Activated CD4-positive, alpha-beta T cell treated with anti-CD3 and anti-CD28 coated beads, Interleukin-2, amount 10 ng/mL, durations not matched to agents 24 days and 14 days (primary cell): ENCODE measurements at regions of chr11 and their contacts with region 1.

Region 1: GRCh38 chr11:66222358-66223149 is 45.9 kb upstream of the RAB1B start:
- DNase-seq: peak; percentile 98
- H3K4me3 Mint-ChIP-seq: peak overlapping the region; percentile 56
- H3K27ac Mint-ChIP-seq: peak overlapping the region; percentile 98
- H3K4me1 Mint-ChIP-seq: peaks cover 21% of the 10 kb centered on the region
- H3K27me3 Mint-ChIP-seq: no peaks in the 10 kb centered on the region

Region 2: GRCh38 chr11:65919146-65920033 is 303.2 kb before region 1 on chr11 and contains the start of gene DRAP1:
- intact Hi-C with region 1: no loop called
- DNase-seq: peak; percentile 99
- H3K4me3 Mint-ChIP-seq: peak within 1 kb of the TSS; percentile 96
- H3K27ac Mint-ChIP-seq: peak within 1 kb of the TSS; percentile 90
- H3K4me1 Mint-ChIP-seq: peaks cover 25% of the 10 kb centered on the region
- H3K27me3 Mint-ChIP-seq: no peaks in the 10 kb centered on the region
- total RNA-seq, gene DRAP1: 113 and 117 TPM in 2 replicates

Region 3: DNA sequence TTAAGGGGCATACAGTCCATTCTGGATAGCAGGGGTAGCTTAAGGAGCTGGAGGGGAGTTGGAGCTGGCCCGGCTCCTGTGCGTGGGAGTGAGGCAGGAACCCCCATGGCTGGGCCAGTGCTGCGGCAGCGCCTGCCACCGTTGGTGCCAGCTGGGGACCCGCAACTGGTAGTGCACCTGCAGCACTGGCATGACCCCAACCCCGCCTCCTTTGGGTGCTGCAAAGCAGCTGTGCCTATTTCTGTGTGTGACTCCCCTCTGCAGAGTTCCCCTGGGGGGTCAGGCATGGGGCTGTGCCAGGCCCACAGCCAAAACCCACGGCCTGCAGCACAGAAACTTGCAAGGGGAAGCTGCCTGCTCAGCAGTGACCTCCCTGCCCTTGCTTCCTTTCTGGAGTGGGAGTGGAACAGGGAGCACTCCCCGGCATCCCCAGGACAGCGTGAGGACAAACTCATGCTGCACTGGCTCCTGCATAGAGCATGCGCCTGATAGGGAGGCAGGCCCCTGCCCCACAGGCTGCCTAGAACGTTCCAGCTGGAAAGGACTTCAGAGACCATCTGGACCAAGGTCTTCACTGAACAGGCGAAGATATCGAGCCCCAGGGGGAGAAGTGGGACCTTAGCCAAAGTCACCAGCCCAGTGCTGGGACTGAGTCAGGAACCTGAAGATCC is 19.7 kb after region 1 on chr11:
- intact Hi-C with region 1: no loop called
- DNase-seq: no peak
- H3K4me3 Mint-ChIP-seq: no peak overlapping the region
- H3K27ac Mint-ChIP-seq: no peak overlapping the region
- H3K4me1 Mint-ChIP-seq: peaks cover 6% of the 10 kb centered on the region
- H3K27me3 Mint-ChIP-seq: no peaks in the 10 kb centered on the region

Region 4: DNA sequence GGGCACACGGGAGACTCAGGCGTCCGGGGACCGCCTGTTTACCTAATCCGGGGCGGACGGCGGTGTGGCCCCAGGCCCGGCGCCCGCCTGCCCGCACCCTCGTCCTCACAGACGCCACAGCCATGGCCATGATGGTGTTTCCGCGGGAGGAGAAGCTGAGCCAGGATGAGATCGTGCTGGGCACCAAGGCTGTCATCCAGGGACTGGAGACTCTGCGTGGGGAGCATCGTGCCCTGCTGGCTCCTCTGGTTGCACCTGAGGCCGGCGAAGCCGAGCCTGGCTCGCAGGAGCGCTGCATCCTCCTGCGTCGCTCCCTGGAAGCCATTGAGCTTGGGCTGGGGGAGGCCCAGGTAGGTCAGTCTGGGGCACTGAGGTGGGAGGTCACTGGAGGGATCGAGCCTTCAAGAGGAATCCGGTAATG is 35.9 kb after region 1 on chr11:
- intact Hi-C with region 1: loop called (anchors 1 kb)
- DNase-seq: no peak
- H3K4me3 Mint-ChIP-seq: peak overlapping the region; percentile 96
- H3K27ac Mint-ChIP-seq: peak overlapping the region; percentile 96
- H3K4me1 Mint-ChIP-seq: peaks cover 25% of the 10 kb centered on the region
- H3K27me3 Mint-ChIP-seq: no peaks in the 10 kb centered on the region

Region 5: GRCh38 chr11:66282468-66283386 is 60.2 kb after region 1 on chr11:
- intact Hi-C with region 1: loop called (anchors 1 kb)
- DNase-seq: peak; percentile 100
- H3K4me3 Mint-ChIP-seq: no peak overlapping the region
- H3K27ac Mint-ChIP-seq: peak overlapping the region; percentile 53
- H3K4me1 Mint-ChIP-seq: peaks cover 27% of the 10 kb centered on the region
- H3K27me3 Mint-ChIP-seq: peaks cover 7% of the 10 kb centered on the region

Region 6: DNA sequence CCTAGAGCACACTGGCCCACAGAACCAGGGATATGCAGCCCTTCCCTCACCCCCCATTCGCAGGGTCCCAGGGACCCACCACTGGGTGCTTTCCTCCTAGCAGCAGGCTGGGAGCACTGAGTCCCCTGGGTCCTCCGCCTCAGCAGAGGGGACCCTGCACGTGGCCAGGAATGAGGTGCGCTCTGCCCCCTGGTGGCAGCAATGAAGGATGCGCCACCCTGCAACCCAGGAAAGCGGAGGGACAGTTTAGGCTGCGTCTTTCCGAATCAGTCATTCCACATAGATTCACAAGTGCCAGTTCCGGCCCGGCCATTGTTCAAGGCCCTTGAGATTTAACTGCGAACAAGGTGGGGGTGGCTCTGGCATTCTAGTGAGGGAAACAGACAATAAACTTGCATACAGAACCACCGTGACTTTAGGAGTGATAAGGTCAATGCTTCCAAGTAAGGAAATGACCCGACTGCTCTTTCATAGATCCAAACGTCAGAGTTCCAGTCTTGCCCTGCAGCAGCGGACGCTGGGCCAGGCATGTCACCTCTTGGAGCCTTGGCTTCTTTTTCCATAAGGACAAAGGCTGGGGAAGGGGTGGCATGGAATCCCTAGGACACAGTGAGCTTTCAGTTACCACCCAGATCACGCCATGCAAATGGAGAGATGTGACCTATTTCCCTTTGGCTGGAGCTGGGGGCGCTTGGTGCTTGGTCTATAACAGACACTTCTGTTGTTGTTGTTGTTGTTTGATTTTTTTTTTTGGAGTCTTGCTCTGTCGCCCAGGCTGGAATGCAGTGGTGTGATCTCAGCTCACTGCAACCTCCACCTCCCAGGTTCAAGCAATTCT is 106.0 kb after region 1 on chr11:
- intact Hi-C with region 1: loop called (anchors 1 kb)
- DNase-seq: peak; percentile 94
- H3K4me3 Mint-ChIP-seq: peak overlapping the region; percentile 34
- H3K27ac Mint-ChIP-seq: peak overlapping the region; percentile 72
- H3K4me1 Mint-ChIP-seq: peaks cover 36% of the 10 kb centered on the region
- H3K27me3 Mint-ChIP-seq: no peaks in the 10 kb centered on the region